Body of pancreas (tissue), 4 donors: ENCODE measurements at regions of chr11 and their contacts with region 1.

Region 1: DNA sequence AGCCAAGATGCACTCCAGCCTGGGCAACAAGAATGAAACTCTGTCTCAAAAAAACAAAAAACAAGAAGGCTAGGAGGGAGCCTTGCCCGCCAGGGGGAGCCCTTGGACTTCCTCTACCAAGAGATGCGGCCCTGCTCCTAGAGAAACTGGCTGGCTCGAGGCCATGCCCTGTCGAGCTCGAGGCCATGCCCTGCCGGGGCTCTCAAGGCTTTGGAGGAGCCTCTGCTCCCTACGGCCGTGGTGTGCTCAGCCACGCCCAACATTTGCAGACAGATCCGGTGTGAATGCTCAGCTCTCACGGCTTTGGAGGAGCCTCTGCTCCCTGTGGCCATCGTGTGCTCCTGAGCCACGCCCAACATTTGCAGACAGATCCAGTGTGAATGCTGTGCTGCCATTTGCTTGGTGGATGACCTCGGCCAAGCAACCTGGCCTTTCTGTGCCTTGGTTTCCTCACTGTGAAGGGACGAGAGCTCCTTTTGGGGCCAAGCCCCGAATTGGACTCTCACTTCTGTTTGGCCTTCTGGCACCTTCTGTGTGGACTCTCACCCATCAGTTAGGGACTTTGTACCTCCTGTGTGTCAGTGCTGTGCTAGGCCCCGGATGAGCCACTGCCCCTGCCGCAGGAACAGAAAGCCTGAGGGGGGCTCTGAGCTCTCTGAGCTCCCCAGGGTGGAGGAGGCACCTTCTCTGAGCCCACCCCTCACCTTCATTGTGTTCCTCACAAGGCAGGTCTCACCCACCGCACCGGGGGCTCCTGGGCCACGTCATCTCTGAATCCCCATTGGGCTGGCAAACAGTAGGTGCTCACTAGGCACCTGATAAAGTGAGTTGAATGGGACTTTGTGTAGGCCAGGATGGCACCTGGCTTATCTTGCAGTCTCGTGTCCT is 14.1 kb downstream of the C11orf24 start:
- DNase-seq: peak; percentile 98 to 100 (median 98)
- ATAC-seq: peak; percentile 91
- H3K4me3 ChIP-seq: no peak overlapping the region
- H3K27ac ChIP-seq: no peak overlapping the region
- H3K4me1 ChIP-seq: peaks cover 5% of the 10 kb centered on the region
- H3K27me3 ChIP-seq: no peaks in the 10 kb centered on the region
- CTCF ChIP-seq: peak; percentile 83 to 96 (median 94)
- POLR2A ChIP-seq: no peak

Region 2: DNA sequence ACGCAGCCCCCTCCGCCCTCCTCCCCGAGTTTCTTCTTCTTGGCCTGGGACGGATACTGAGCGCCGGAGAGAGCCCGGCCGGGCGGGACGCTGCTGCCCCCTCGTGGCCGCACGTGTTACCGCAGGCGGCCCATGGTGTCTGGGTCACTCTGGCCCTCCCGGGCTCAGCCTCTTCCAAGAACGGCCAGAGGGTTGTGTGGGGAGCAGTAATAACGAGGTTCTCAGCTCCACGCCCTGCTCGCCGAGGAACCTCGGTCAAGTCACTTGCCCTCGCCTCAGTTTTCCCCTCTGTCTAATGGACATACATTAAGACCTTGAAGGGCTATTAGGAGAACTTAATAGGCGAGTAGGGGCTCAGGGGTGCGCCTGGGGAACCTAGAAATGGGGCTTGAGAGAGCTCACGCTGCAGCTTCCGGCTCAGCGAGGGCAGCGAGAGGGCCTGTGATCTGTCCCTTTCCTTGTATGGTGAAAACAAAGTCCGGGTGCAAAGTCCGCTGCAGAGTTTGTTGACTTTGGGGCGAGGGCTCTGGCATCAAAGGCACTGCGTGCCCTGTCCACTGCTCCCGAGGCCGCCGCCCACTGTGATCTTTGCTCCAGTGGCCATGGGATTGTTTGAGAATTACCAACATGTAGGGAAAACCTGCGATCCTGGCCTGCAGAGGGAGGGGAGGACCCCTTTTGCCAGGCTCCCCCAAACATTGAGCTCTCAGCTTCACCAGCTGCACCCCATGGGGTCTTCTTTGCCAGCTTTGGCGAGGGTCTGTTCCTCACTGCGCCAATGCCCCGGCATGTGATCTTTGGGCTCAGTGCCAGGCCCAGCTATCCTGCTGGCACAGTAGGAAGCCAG is 40.3 kb after region 1 on chr11:
- intact Hi-C with region 1: loop called (anchors 5 kb)
- DNase-seq: peak; percentile 81 to 85 (median 84)
- ATAC-seq: peak; percentile 92
- H3K4me3 ChIP-seq: no peak overlapping the region
- H3K27ac ChIP-seq: peak overlapping the region; percentile 46 to 92 (median 76)
- H3K4me1 ChIP-seq: peaks cover 19% of the 10 kb centered on the region
- H3K27me3 ChIP-seq: no peaks in the 10 kb centered on the region
- CTCF ChIP-seq: peak; percentile 96 to 100 (median 98)
- POLR2A ChIP-seq: peak in 2 of 3 donors; percentile 41 to 55

Region 3: DNA sequence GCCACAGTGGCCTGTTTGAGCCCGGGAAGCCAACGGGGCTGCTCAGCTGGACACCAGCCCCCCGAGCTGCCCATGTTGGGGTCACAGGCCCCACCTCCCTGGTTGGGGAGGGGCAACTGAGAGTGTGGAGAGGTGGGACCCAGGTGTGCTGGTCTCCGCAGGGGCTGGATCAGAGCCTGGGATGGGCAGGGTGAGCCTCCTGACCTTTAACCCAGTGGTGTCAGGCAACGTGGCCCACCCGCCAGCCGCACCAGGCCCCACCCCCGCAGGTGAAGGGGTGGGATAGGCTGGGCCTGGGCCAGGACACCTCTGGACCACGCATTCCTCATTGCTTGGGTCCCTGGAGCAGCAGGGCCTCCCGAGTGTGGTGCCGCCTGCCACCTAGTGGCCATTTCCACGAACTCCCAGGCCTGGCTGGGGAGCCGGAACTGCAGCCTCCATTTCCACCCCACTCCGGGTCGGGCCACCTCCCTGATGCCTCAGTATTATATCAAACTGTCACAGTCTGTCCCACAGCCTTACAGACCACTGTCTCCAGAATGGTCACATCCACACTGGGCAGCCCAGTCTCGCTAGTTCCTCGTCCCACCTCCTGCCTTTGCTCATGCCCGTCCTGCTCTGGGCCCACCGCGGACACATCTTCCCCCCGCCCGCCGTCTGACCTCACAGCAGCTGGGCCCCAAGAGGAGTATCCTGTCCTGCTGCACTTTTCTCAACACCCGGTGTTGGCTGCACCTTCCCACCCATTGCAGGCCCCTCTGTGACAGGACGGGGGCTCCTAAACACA is 189.5 kb after region 1 on chr11:
- intact Hi-C with region 1: loop called (anchors 5 kb)
- DNase-seq: peak; percentile 70 to 77 (median 76)
- ATAC-seq: peak; percentile 82
- H3K4me3 ChIP-seq: no peak overlapping the region
- H3K27ac ChIP-seq: no peak overlapping the region
- H3K4me1 ChIP-seq: no peaks in the 10 kb centered on the region
- H3K27me3 ChIP-seq: no peaks in the 10 kb centered on the region
- CTCF ChIP-seq: peak; percentile 82 to 91 (median 87)
- POLR2A ChIP-seq: no peak